Panc1 (cell line): ENCODE measurements at regions of chr2 and their contacts with region 1.

Region 1: DNA sequence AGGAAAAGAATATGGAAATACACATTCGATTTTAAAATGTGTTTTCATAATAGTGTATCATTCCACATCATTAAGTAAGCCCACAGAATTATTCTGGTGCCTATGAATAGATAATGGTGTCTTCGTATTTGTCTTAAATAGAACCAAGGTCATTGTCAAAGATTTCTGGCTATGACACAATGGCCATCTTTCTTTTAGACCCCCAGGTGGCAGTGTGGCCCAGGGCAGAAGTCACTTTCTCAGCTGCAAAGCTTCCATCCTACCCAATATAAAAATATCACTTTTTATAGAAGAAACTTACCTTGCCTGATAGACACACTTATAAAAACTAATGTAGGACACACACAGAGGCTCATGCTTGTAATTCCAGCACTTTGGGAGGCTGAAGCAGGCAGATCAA is 57.5 kb downstream of the ZRANB3 start:
- DNase-seq: peak; percentile 15
- ATAC-seq: peak; percentile 70; the same call in 1 of the 2 replicates
- H3K4me3 ChIP-seq: no peak overlapping the region
- H3K27ac ChIP-seq: no peak overlapping the region
- H3K4me1 ChIP-seq: no peaks in the 10 kb centered on the region
- H3K27me3 ChIP-seq: no peaks in the 10 kb centered on the region
- CTCF ChIP-seq: peak; percentile 77

Region 2: GRCh38 chr2:135590619-135591260 is 117.2 kb after region 1 on chr2:
- CTCF ChIA-PET with region 1: no interaction called
- POLR2A ChIA-PET with region 1: interaction called, 3 read pairs
- in situ Hi-C with region 1: no loop called
- intact Hi-C with region 1: loop called (anchors 10 kb)
- DNase-seq: no peak
- ATAC-seq: no peak
- H3K4me3 ChIP-seq: no peak overlapping the region
- H3K27ac ChIP-seq: no peak overlapping the region
- H3K4me1 ChIP-seq: no peaks in the 10 kb centered on the region
- H3K27me3 ChIP-seq: no peaks in the 10 kb centered on the region
- CTCF ChIP-seq: no peak

Region 3: DNA sequence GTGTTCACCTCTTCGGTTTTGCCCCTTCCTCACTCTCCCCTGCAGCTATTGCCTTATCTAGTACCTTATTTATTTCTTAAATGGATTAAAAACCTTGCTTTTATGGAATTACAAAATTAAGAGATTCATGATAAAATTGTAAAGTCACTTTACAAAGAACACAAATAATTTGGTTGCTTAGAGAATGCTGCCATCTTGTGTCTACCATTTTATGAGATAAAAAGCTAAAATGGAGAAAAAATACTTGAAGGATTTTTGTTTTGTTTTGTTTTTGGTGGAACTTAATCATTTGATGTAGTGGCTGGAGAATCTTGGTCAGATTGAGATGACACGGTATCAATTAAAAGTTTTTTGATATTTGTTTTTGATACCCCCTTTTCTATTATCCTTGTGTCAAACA is 127.3 kb after region 1 on chr2:
- CTCF ChIA-PET with region 1: interaction called, 12 read pairs
- POLR2A ChIA-PET with region 1: no interaction called
- in situ Hi-C with region 1: no loop called
- intact Hi-C with region 1: loop called (anchors 10 kb)
- DNase-seq: no peak
- ATAC-seq: no peak
- H3K4me3 ChIP-seq: no peak overlapping the region
- H3K27ac ChIP-seq: no peak overlapping the region
- H3K4me1 ChIP-seq: no peaks in the 10 kb centered on the region
- H3K27me3 ChIP-seq: no peaks in the 10 kb centered on the region
- CTCF ChIP-seq: no peak; the same call in 1 of the 2 replicates

Region 4: DNA sequence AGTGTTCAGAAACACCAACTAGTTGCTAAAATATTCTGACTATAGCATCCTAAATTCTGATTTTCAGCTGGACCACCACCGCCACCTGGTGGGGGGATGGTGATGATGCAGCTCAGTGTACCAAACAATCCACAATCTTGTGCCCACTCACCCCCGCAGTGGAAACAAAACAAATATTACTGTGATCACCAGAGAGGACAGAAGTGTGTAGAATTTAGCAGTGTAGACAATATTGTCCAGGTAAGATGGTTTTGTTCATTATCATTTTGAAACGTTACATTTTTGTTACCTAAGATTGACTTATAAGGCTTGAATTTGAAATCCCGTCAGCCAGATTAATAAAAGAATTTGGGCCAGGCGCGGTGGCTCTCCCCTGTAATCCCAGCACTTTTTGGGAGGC is 236.4 kb after region 1 on chr2:
- CTCF ChIA-PET with region 1: interaction called, 6 read pairs
- POLR2A ChIA-PET with region 1: no interaction called
- in situ Hi-C with region 1: no loop called
- intact Hi-C with region 1: loop called (anchors 5 kb)
- DNase-seq: no peak
- ATAC-seq: peak; percentile 70
- H3K4me3 ChIP-seq: no peak overlapping the region
- H3K27ac ChIP-seq: no peak overlapping the region
- H3K4me1 ChIP-seq: no peaks in the 10 kb centered on the region
- H3K27me3 ChIP-seq: no peaks in the 10 kb centered on the region
- CTCF ChIP-seq: peak; percentile 95

Region 5: GRCh38 chr2:135785032-135785431 is 311.5 kb after region 1 on chr2:
- CTCF ChIA-PET with region 1: no interaction called
- POLR2A ChIA-PET with region 1: no interaction called
- in situ Hi-C with region 1: no loop called
- intact Hi-C with region 1: no loop called
- DNase-seq: no peak
- ATAC-seq: 0 out of 2 replicates have a peak, but pooled peaks have one; percentile 51
- H3K4me3 ChIP-seq: no peak overlapping the region
- H3K27ac ChIP-seq: no peak overlapping the region
- H3K4me1 ChIP-seq: no peaks in the 10 kb centered on the region
- H3K27me3 ChIP-seq: no peaks in the 10 kb centered on the region
- CTCF ChIP-seq: no peak